ENCODE measurements at regions of chr3 and their contacts with region 1.

Region 1: GRCh38 chr3:194333212-194333980 is 17.7 kb downstream of the CPN2 start:
- DNase-seq: peak; percentile 78 to 99 (median 93)

Region 2: DNA sequence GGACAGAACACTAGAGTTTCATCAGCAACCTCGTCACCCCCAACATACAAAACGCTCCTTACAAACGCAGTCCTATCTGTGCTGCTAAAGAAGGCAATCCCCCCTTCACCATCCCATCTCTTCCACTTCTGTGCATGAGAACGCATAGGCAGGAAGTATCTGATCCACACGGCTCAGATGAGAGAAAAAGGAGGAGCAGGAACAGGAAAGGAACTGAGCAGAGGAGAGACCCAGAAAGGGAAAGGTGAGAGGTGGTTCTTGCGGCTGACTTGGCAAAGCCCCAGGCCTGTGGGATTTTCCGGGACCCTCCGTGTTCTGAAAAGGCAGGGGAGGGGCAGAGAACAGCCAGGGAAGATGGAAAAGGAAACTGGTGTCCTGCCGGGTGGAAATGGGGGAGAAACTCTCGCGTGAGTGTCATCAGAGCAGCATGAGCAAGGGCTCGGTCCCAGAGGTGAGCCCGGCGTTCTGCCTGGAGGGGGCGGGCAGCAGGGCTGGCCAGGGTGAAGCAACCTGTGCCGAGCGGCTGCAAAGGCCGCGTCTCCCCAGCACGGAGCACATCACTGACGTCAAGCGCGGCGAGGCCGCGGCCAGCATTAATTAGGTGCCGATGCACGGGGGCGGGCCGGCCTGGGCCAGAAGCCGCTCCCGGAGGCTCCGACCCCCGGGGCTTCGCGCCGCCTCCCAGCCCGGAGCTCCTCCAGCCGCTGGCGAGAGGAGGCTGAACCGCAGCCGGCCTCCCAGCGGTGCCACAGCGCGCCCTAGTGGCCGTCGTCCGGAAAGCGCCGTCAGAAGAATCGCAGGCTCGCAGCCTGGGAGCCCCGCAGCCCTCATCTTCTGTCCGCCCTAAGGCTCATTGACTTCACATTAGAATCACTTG is 18.1 kb before region 1 on chr3:
- intact Hi-C with region 1: no loop called
- DNase-seq: peak; percentile 74 to 98 (median 88)

Region 3: GRCh38 chr3:194404365-194405140 is 71.2 kb after region 1 on chr3:
- intact Hi-C with region 1: loop called (anchors 2 kb)
- DNase-seq: peak in 1 of 10 donors; percentile 36

Region 4: GRCh38 chr3:194592798-194593752 is 259.7 kb after region 1 on chr3:
- intact Hi-C with region 1: loop called (anchors 10 kb)
- DNase-seq: peak in 1 of 10 donors; percentile 31

Region 5: GRCh38 chr3:195372220-195372619 is 1038.8 kb after region 1 on chr3:
- intact Hi-C with region 1: no loop called
- DNase-seq: no peak